Activated CD4-positive, alpha-beta memory T cell treated with anti-CD3 and anti-CD28 coated beads, Interleukin-2, amount 10 ng/mL, durations not matched to agents 7 days and 5 days (primary cell): ENCODE measurements at regions of chr12 and their contacts with region 1.

Region 1: GRCh38 chr12:121399391-121400331 is at the start of gene RNF34:
- DNase-seq: peak; percentile 99
- H3K4me3 Mint-ChIP-seq: peak within 1 kb of the TSS; percentile 90
- H3K27ac Mint-ChIP-seq: peak within 1 kb of the TSS; percentile 97
- H3K4me1 Mint-ChIP-seq: peaks cover 42% of the 10 kb centered on the region
- H3K27me3 Mint-ChIP-seq: no peaks in the 10 kb centered on the region
- total RNA-seq, gene RNF34: 88.2 to 90.1 TPM

Region 2: GRCh38 chr12:121334513-121335343 is 64.9 kb before region 1 on chr12:
- CTCF ChIA-PET with region 1: interaction called, 29 read pairs
- POLR2A ChIA-PET with region 1: interaction called, 23 read pairs
- DNase-seq: no peak
- H3K4me3 Mint-ChIP-seq: no peak overlapping the region
- H3K27ac Mint-ChIP-seq: peak overlapping the region; percentile 49
- H3K4me1 Mint-ChIP-seq: peaks cover 6% of the 10 kb centered on the region
- H3K27me3 Mint-ChIP-seq: no peaks in the 10 kb centered on the region

Region 3: DNA sequence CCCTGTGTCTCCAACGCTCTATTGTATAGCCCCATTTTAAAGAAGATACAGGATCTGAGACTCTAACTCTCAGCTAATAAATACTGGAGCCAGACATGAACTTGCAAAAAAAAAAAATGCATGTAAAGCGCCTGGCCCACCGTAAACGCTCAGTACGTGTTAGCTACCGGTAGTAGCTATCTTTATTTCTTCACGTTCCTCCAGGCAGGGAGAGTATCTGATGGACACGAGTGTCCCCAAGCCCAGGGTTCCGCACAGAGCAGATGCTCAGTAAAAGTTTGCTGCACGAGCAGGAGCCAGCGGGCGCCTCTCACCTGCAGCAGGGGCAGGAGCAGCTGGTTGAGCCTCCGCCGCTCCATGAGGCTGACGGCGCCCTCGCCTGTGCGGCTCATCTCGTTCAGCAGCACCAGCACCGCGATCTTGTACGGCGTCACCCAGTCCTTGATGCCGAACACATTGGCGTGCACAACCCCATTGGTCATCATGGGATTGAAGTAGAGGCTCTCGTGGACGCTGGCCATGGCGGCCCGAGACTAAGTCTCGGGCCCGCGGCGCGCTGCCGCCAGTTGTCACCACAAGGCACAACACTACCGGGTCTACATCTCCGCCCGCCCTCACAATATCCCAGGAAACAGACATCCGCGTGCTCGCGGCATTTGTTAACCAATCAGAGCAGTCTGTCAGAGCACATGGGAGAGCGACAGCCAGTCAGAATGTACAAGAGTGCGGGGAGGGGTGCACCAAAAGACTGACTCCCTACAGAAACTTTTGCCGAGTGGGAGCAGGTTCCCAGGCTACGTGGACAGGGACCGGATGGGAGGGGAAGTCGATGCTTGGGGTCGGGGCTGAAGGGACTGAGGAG is 47.6 kb before region 1 on chr12 and contains the start of gene ANAPC5:
- CTCF ChIA-PET with region 1: interaction called, 7 read pairs
- POLR2A ChIA-PET with region 1: interaction called, 142 read pairs
- DNase-seq: peak; percentile 93
- H3K4me3 Mint-ChIP-seq: peak within 1 kb of the TSS; percentile 91
- H3K27ac Mint-ChIP-seq: peak within 1 kb of the TSS; percentile 91
- H3K4me1 Mint-ChIP-seq: peaks cover 36% of the 10 kb centered on the region
- H3K27me3 Mint-ChIP-seq: peaks cover 5% of the 10 kb centered on the region
- total RNA-seq, gene ANAPC5: 125 to 131 TPM

Region 4: DNA sequence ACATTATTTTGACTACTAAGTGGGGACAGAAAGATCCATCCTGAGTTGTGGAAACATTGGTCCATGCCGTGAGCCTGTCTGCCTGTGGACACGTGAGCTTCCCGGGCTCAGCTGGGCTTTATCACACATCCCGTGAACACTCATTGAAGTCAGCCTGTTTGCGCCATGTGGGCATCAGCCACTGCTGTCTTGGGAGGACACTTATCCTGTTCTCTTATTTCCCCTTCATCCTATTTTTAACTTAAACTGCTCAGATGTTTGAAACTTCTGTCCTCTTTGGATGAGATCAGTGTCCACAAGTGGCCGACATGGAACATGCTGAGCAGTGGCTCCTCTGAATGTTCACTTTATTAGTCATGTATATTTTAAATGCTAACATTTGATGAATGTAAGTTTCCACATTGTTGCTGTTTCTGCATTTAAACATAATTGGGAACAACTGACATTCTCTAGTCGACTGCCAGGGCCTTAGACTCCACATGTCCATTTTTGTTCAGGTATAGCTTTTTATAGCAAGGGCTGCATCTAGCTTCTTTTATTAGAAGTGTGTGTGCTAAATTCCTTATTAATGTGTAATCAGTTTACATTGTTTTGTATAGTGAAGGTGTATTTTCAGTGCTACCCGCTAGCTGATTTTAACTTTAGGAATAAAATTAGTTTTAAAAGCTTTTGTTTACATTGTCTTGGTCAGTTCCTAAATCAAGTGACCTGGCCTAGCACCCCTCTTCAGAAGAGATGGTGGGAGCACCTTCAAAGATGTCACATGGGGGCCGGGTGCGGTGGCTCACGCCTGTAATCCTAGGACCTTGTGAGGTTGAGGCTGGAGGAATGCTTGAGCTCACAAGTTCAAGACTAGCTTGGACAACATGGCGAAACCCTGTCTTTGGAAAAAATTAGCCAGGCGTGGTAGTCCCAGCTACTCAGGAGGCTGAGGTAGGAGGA is 24.3 kb after region 1 on chr12:
- CTCF ChIA-PET with region 1: no interaction called
- POLR2A ChIA-PET with region 1: interaction called, 27 read pairs
- DNase-seq: no peak
- H3K4me3 Mint-ChIP-seq: no peak overlapping the region
- H3K27ac Mint-ChIP-seq: no peak overlapping the region
- H3K4me1 Mint-ChIP-seq: peaks cover 3% of the 10 kb centered on the region
- H3K27me3 Mint-ChIP-seq: no peaks in the 10 kb centered on the region

Region 5: DNA sequence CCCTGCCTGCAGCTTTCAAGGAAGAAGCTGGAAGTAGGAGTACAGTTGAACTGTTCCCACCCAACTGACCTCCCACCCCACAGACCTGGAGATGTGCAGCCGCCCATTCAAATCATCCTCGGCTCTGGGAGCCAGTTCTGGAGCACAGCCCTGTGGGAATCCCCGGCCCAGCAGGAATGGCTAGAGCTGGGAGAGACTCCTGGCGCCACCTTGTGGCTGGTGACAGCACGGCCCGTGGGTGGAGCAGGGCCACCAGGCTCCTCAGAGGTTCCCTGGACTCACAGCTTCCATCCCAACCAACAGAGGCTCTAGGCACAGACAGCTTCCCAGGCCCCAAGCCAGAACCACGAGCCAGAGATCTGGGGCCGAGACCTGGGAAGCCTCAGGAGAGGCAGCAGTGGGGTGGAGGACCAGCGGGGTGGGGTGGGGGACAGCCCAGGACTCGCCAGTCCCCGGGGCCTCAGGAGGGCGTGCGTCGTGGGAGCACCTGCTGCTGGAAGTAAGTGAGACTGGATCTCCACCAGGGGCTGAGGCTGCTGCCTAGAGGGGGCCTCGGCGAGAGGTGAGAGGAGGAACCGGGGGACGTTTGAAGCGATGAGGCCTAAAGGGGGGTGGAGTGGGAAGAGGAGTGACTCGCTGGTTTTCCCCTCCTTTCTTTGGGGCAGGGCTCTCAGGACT is 43.7 kb after region 1 on chr12:
- CTCF ChIA-PET with region 1: interaction called, 10 read pairs
- POLR2A ChIA-PET with region 1: interaction called, 7 read pairs
- DNase-seq: peak; percentile 67
- H3K4me3 Mint-ChIP-seq: no peak overlapping the region
- H3K27ac Mint-ChIP-seq: no peak overlapping the region
- H3K4me1 Mint-ChIP-seq: peaks cover 2% of the 10 kb centered on the region
- H3K27me3 Mint-ChIP-seq: no peaks in the 10 kb centered on the region

Region 6: GRCh38 chr12:121802846-121803630 is 403.4 kb after region 1 on chr12:
- CTCF ChIA-PET with region 1: no interaction called
- POLR2A ChIA-PET with region 1: interaction called, 10 read pairs
- DNase-seq: peak; percentile 92
- H3K4me3 Mint-ChIP-seq: peak overlapping the region; percentile 81
- H3K27ac Mint-ChIP-seq: peak overlapping the region; percentile 100
- H3K4me1 Mint-ChIP-seq: peaks cover 36% of the 10 kb centered on the region
- H3K27me3 Mint-ChIP-seq: no peaks in the 10 kb centered on the region